Activated T-helper 2 cell treated with anti-CD3 and anti-CD28 coated beads, Interferon-gamma antibody, Interleukin-2, Interleukin-4, amounts not matched to agents 10 μg/mL and 5 μg/mL and 100 μg/mL, durations not matched to agents 14 hours and 24 hours and 36 hours (primary cell): ENCODE measurements at regions of chr9 and their contacts with region 1.

Region 1: DNA sequence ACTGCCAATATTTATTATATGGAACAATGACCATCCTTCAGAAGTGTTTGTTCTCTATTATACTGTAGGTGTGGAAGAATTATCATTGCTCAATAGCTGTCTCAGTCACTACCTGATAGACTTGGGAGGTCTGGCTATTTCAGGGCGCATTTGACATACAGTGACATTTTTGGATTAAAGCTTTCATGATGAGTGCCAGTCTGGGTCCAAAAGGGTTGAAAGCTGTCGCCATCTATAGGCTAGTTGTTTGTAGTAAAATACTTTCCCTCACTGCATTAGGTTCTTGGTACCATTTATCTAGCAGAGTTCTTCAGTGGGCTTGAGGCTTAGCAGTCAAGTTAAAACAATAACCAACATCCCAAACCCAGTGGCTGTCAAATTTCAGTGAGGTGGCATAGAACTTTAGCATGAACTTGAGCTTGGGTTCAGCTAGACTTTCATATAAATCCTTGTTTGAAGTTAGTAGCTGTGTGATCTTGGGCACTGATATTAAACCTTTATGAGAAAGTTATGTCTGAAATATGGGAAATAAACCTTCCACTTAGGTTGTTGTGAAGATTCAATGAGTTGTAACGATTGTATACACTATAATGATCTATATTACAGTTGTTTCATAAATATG is 110.5 kb upstream of the CDKN2B start:
- DNase-seq: no peak
- H3K4me3 Mint-ChIP-seq: no peak overlapping the region
- H3K27ac Mint-ChIP-seq: no peak overlapping the region
- H3K4me1 Mint-ChIP-seq: peaks cover 16% of the 10 kb centered on the region
- H3K27me3 Mint-ChIP-seq: peaks cover 68% of the 10 kb centered on the region

Region 2: GRCh38 chr9:22037954-22038690 is 81.5 kb before region 1 on chr9:
- intact Hi-C with region 1: loop called (anchors 2 kb)
- DNase-seq: no peak
- H3K4me3 Mint-ChIP-seq: no peak overlapping the region
- H3K27ac Mint-ChIP-seq: no peak overlapping the region
- H3K4me1 Mint-ChIP-seq: peaks cover 46% of the 10 kb centered on the region
- H3K27me3 Mint-ChIP-seq: peaks cover 26% of the 10 kb centered on the region

Region 3: GRCh38 chr9:22169727-22170503 is 50.3 kb after region 1 on chr9:
- intact Hi-C with region 1: no loop called
- DNase-seq: no peak
- H3K4me3 Mint-ChIP-seq: no peak overlapping the region
- H3K27ac Mint-ChIP-seq: no peak overlapping the region
- H3K4me1 Mint-ChIP-seq: peaks cover 5% of the 10 kb centered on the region
- H3K27me3 Mint-ChIP-seq: peaks cover 25% of the 10 kb centered on the region

Region 4: GRCh38 chr9:22416692-22417060 is 297.0 kb after region 1 on chr9:
- intact Hi-C with region 1: no loop called
- DNase-seq: no peak
- H3K4me3 Mint-ChIP-seq: no peak overlapping the region
- H3K27ac Mint-ChIP-seq: no peak overlapping the region
- H3K4me1 Mint-ChIP-seq: no peaks in the 10 kb centered on the region
- H3K27me3 Mint-ChIP-seq: no peaks in the 10 kb centered on the region